Stomach (tissue), 19 donors: ENCODE measurements at regions of chr1 and their contacts with region 1.

Region 1: GRCh38 chr1:61453111-61453961 is 271.6 kb downstream of the TM2D1 start:
- DNase-seq: peak; percentile 85 to 95
- H3K4me3 ChIP-seq: no peak overlapping the region
- H3K27ac ChIP-seq: peak overlapping the region in 4 of 5 donors; percentile 68 to 78 (median 71)
- H3K4me1 ChIP-seq: peaks cover 29 to 59% (median 44%) of the 10 kb centered on the region in 4 donors
- H3K27me3 ChIP-seq: no peaks in the 10 kb centered on the region
- CTCF ChIP-seq: peak in 5 of 7 experiments; percentile 56 to 72 (median 61)
- EP300 ChIP-seq: no peak
- POLR2A ChIP-seq: no peak

Region 2: GRCh38 chr1:60978421-60979357 is 474.6 kb before region 1 on chr1:
- intact Hi-C with region 1: loop called (anchors 10 kb)
- DNase-seq: peak; percentile 43 to 73
- H3K4me3 ChIP-seq: no peak overlapping the region
- H3K27ac ChIP-seq: no peak overlapping the region
- H3K4me1 ChIP-seq: peaks cover 0 to 17% (median 8%) of the 10 kb centered on the region in 4 donors
- H3K27me3 ChIP-seq: no peaks in the 10 kb centered on the region
- CTCF ChIP-seq: peak in 5 of 7 experiments; percentile 20 to 55 (median 38)
- EP300 ChIP-seq: no peak
- POLR2A ChIP-seq: no peak

Region 3: GRCh38 chr1:61049850-61050540 is 403.3 kb before region 1 on chr1:
- intact Hi-C with region 1: loop called (anchors 5 kb)
- DNase-seq: peak; percentile 96 to 97
- H3K4me3 ChIP-seq: peak overlapping the region; percentile 74 to 95 (median 88)
- H3K27ac ChIP-seq: peak overlapping the region; percentile 93 to 99 (median 95)
- H3K4me1 ChIP-seq: peaks cover 13 to 47% (median 38%) of the 10 kb centered on the region in 4 donors
- H3K27me3 ChIP-seq: peaks cover 0 to 21% (median 0%) of the 10 kb centered on the region in 3 donors
- CTCF ChIP-seq: peak in 6 of 7 experiments; percentile 52 to 98 (median 95)
- EP300 ChIP-seq: no peak
- POLR2A ChIP-seq: no peak

Region 4: GRCh38 chr1:61174060-61174795 is 279.1 kb before region 1 on chr1:
- intact Hi-C with region 1: no loop called
- DNase-seq: no peak
- H3K4me3 ChIP-seq: no peak overlapping the region
- H3K27ac ChIP-seq: peak overlapping the region in 1 of 5 donors; percentile 74
- H3K4me1 ChIP-seq: peaks cover 31 to 88% (median 52%) of the 10 kb centered on the region in 4 donors
- H3K27me3 ChIP-seq: no peaks in the 10 kb centered on the region
- CTCF ChIP-seq: no peak
- EP300 ChIP-seq: no peak
- POLR2A ChIP-seq: no peak

Region 5: GRCh38 chr1:61556631-61557030 is 103.3 kb after region 1 on chr1:
- intact Hi-C with region 1: no loop called
- DNase-seq: no peak
- H3K4me3 ChIP-seq: no peak overlapping the region
- H3K27ac ChIP-seq: no peak overlapping the region
- H3K4me1 ChIP-seq: no peaks in the 10 kb centered on the region
- H3K27me3 ChIP-seq: no peaks in the 10 kb centered on the region
- CTCF ChIP-seq: no peak
- EP300 ChIP-seq: no peak
- POLR2A ChIP-seq: no peak